Activated T-helper 1 cell treated with anti-CD3 and anti-CD28 coated beads, Interleukin-12 subunit alpha, Interleukin-12 subunit beta, Interleukin-2, Interleukin-4 antibody, amounts not matched to agents 30 ng/mL and 10 ng/mL and 1 ng/mL, durations not matched to agents 14 hours and 24 hours and 36 hours (primary cell): ENCODE measurements at regions of chr21 and their contacts with region 1.

Region 1: GRCh38 chr21:36330904-36331303 is 10.9 kb downstream of the MORC3 start:
- DNase-seq: no peak
- H3K4me3 Mint-ChIP-seq: no peak overlapping the region
- H3K27ac Mint-ChIP-seq: no peak overlapping the region
- H3K4me1 Mint-ChIP-seq: peaks cover 13% of the 10 kb centered on the region
- H3K27me3 Mint-ChIP-seq: no peaks in the 10 kb centered on the region

Region 2: GRCh38 chr21:36260030-36260787 is 70.7 kb before region 1 on chr21:
- intact Hi-C with region 1: loop called (anchors 1 kb)
- DNase-seq: peak; percentile 31
- H3K4me3 Mint-ChIP-seq: peak overlapping the region; percentile 70
- H3K27ac Mint-ChIP-seq: peak overlapping the region; percentile 53
- H3K4me1 Mint-ChIP-seq: peaks cover 19% of the 10 kb centered on the region
- H3K27me3 Mint-ChIP-seq: no peaks in the 10 kb centered on the region